Mammary epithelial cell (primary cell): ENCODE measurements at regions of chr7 and their contacts with region 1.

Region 1: GRCh38 chr7:12211054-12211710 is at the start of gene TMEM106B:
- DNase-seq: peak; percentile 93
- H3K4me3 ChIP-seq: peak within 1 kb of the TSS; percentile 59 to 62 (median 60)
- H3K27ac ChIP-seq: peak within 1 kb of the TSS; percentile 55
- H3K4me1 ChIP-seq: peaks cover 8% of the 10 kb centered on the region
- H3K27me3 ChIP-seq: no peaks in the 10 kb centered on the region
- CTCF ChIP-seq: peak in 1 of 2 donors; percentile 39
- total RNA-seq, gene TMEM106B: 33.5 to 75.2 TPM

Region 2: GRCh38 chr7:11648980-11649379 is 562.2 kb before region 1 on chr7:
- CTCF ChIA-PET with region 1: no interaction called
- dilution Hi-C with region 1: no loop called
- in situ Hi-C with region 1: no loop called
- intact Hi-C with region 1: no loop called
- DNase-seq: no peak
- H3K4me3 ChIP-seq: no peak overlapping the region
- H3K27ac ChIP-seq: no peak overlapping the region
- H3K4me1 ChIP-seq: no peaks in the 10 kb centered on the region
- H3K27me3 ChIP-seq: no peaks in the 10 kb centered on the region
- CTCF ChIP-seq: no peak

Region 3: GRCh38 chr7:12174931-12175330 is 36.3 kb before region 1 on chr7:
- CTCF ChIA-PET with region 1: interaction called, 10 read pairs
- dilution Hi-C with region 1: no loop called
- in situ Hi-C with region 1: no loop called
- intact Hi-C with region 1: no loop called
- DNase-seq: no peak
- H3K4me3 ChIP-seq: no peak overlapping the region
- H3K27ac ChIP-seq: no peak overlapping the region
- H3K4me1 ChIP-seq: no peaks in the 10 kb centered on the region
- H3K27me3 ChIP-seq: peaks cover 5% of the 10 kb centered on the region
- CTCF ChIP-seq: no peak

Region 4: DNA sequence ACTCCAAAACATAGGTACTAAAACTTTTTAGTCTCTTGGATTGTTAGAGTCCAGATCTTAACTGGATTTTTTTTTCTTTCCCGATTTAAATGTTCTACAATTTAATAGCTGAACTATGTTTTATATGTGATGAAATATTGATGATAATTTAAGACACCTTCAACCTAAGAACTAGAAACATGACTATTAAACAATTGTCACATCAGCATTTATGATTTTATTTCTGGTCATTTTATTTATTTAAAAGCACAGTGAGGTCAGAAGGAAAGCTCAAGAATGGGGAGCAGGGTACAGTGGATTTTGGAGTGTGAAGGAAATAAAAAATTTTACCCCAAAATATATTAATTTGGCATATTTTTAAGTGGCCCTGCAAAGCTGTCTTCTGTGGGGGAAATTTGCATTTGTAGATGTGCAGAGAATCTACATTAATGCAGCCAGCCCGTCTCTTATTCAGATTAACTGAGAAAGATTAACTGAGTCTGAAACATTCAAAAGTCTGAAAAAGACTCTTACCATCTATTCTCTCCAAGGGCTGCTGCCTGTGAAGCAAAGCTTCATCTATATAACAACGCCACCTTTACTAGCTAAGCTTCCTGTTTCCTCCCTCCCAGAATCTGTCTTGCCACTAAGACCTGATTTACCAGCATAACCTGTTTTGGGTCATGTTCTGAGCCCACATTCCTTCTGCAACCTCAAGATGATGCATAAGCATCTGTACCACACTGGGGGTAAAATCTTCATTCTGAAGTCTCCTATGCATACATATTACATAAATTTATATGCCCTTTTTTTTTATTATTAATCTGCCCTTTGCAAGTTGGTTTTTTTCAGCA is 86.3 kb after region 1 on chr7:
- CTCF ChIA-PET with region 1: no interaction called
- dilution Hi-C with region 1: no loop called
- in situ Hi-C with region 1: no loop called
- intact Hi-C with region 1: loop called (anchors 2 kb)
- DNase-seq: peak; percentile 76
- H3K4me3 ChIP-seq: no peak overlapping the region
- H3K27ac ChIP-seq: no peak overlapping the region
- H3K4me1 ChIP-seq: peaks cover 4% of the 10 kb centered on the region
- H3K27me3 ChIP-seq: no peaks in the 10 kb centered on the region
- CTCF ChIP-seq: no peak